HEK293 (cell line): ENCODE measurements at regions of chr19 and their contacts with region 1.

Region 1: DNA sequence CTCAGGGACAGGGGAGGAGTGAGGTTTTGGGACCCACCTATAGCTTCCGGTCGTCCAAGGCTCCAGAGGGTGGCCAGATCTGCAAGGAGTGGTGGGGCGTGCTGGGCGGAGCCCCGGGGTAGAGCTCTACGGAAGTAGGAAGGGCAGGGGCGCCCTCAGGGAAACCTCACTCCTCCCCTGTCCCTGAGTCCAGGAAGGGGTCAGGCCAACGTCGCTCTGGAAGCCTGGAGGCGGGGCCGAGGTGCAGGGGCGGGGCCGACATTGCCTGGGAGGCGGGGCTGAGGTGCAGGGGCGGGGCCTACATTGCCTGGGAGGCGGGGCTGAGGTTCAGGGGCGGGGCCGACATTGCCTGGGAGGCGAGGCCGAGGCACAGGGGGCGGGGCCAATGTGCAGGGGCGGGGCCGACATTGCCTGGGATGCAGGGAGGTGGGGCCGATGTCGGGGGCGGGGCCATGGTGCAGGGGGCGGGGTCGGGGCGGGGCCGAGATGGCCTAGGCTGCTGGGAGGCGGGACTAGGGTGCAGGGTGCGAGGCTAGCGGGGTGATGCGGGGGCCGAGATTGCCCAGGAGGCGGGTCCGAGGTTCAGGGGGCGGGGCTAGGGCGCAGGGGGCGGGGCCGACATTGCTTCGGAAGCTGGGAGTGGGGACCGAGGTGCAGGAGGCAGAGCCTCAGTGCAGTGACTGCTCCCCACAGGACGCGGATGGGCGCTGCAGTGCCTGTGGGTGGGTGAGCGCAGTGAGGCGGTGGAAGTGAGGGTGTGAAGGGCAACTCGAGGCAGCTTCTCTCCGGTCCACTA is 4.9 kb upstream of the PALM start:
- H3K4me3 ChIP-seq: no peak overlapping the region
- H3K27ac ChIP-seq: no peak overlapping the region
- H3K4me1 ChIP-seq: no peaks in the 10 kb centered on the region
- CTCF ChIP-seq: no peak

Region 2: DNA sequence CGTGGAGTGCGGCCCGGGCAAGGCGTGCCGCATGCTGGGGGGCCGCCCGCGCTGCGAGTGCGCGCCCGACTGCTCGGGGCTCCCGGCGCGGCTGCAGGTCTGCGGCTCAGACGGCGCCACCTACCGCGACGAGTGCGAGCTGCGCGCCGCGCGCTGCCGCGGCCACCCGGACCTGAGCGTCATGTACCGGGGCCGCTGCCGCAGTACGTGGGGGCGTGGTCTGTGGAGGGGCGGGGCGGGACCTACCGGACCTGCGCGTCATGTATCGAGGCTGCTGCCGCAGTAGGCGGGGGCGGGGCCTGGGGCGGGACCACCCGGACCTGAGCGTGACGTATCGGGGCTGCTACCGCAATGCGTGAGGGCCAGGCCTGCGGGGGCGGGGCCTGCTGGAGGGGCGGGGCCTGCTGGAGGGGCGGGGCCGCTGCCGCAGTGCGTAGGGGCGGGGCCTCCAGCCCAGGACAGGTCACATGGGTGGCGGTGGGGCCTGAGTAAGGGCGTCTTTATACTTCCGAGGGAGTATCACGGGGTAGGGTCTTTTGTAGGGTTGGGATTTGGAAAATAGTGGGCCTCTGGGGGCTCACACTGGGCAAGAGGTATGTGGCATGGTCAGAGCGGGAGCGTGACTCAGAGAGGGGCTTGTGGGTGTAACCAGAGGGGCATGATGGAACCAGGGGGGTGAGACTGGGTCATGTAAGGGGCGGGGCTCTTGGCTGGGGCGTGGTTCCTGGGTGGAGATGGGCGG is 23.4 kb before region 1 on chr19:
- CTCF ChIA-PET with region 1: no interaction called
- POLR2A ChIA-PET with region 1: interaction called, 10 read pairs
- H3K4me3 ChIP-seq: peak overlapping the region; percentile 57
- H3K27ac ChIP-seq: peak overlapping the region; percentile 92
- H3K4me1 ChIP-seq: no peaks in the 10 kb centered on the region
- CTCF ChIP-seq: no peak

Region 3: GRCh38 chr19:734716-735115 is 30.9 kb after region 1 on chr19:
- CTCF ChIA-PET with region 1: interaction called, 12 read pairs
- POLR2A ChIA-PET with region 1: no interaction called
- H3K4me3 ChIP-seq: no peak overlapping the region
- H3K27ac ChIP-seq: no peak overlapping the region
- H3K4me1 ChIP-seq: no peaks in the 10 kb centered on the region
- CTCF ChIP-seq: no peak